Heart right ventricle (tissue), 16 donors: ENCODE measurements at regions of chr3 and their contacts with region 1.

Region 1: GRCh38 chr3:12719984-12720898 is 38.8 kb downstream of the TMEM40 start:
- DNase-seq: peak; percentile 63 to 89
- ATAC-seq: peak; percentile 87 to 97 (median 96)
- H3K4me3 ChIP-seq: peak overlapping the region in 8 of 10 donors; percentile 24 to 44 (median 40)
- H3K27ac ChIP-seq: peak overlapping the region in 4 of 10 donors; percentile 5 to 53 (median 24)
- H3K4me1 ChIP-seq: peaks cover 0 to 16% (median 4%) of the 10 kb centered on the region in 9 donors
- H3K27me3 ChIP-seq: no peaks in the 10 kb centered on the region
- CTCF ChIP-seq: peak; percentile 79 to 97 (median 93)

Region 2: DNA sequence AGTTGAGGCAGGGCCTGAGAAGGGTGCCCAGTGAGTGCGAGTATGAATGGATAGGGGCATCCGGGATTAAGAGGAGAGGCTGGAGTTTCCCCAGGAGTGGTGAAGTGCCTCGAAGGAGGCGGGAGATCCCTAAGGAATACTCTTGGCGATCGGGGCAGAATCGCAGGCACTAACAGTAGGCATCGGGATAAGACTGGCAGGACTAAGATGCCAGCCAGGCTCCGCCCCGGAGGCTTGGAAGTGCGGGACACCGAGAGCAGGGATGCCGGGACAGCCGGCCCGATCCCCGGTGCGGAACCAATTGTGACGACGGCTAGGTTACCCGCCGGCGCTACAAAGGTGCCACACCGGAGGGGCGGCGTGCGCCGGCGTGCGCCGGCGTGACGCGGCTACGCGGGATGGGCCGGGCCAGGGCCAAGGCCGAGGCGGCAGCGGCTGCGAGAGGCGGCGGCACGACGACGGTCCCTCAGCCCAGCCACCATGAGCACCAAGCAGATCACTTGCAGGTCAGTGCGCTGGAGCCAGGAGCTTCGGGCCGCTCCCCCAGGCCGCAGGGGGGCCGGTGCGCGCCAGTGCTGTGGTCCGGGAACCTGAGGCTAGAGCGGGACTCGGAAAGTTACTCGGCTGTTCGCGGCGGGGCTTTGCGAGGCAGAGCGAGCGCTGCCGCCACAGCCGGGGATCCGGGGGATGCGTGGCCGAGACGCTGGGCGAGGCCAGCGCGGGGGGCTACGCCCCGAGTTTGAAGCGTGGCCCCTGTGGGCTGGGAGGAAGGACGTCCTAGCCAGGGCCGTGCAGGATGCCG is 163.4 kb before region 1 on chr3 and contains the start of gene MKRN2:
- intact Hi-C with region 1: loop called in 3 of 10 experiments (anchors 5 to 10 kb)
- DNase-seq: peak; percentile 84 to 88
- ATAC-seq: peak; percentile 92 to 98 (median 96)
- H3K4me3 ChIP-seq: peak within 1 kb of the TSS; percentile 61 to 99 (median 86)
- H3K27ac ChIP-seq: peak within 1 kb of the TSS; percentile 93 to 98 (median 98)
- H3K4me1 ChIP-seq: peaks cover 9 to 64% (median 51%) of the 10 kb centered on the region in 9 donors
- H3K27me3 ChIP-seq: peaks cover 0 to 38% (median 6%) of the 10 kb centered on the region in 7 donors
- CTCF ChIP-seq: peak in 1 of 9 donors; percentile 14
- total RNA-seq, gene MKRN2: 31.3 to 51.0 (median 40.5) TPM

Region 3: GRCh38 chr3:12588039-12589009 is 131.9 kb before region 1 on chr3:
- intact Hi-C with region 1: loop called in 2 of 10 experiments (anchors 10 kb)
- DNase-seq: no peak
- ATAC-seq: no peak
- H3K4me3 ChIP-seq: no peak overlapping the region
- H3K27ac ChIP-seq: peak overlapping the region in 6 of 10 donors; percentile 17 to 54 (median 34)
- H3K4me1 ChIP-seq: peaks cover 0 to 51% (median 17%) of the 10 kb centered on the region in 9 donors
- H3K27me3 ChIP-seq: no peaks in the 10 kb centered on the region
- CTCF ChIP-seq: no peak